Dendritic cell treated with granulocyte-macrophage colony-stimulating factor and Interleukin-4, amounts not matched to agents 40 ng/mL and 50 ng/mL, for 4 days (primary cell): ENCODE measurements at regions of chr20 and their contacts with region 1.

Region 1: DNA sequence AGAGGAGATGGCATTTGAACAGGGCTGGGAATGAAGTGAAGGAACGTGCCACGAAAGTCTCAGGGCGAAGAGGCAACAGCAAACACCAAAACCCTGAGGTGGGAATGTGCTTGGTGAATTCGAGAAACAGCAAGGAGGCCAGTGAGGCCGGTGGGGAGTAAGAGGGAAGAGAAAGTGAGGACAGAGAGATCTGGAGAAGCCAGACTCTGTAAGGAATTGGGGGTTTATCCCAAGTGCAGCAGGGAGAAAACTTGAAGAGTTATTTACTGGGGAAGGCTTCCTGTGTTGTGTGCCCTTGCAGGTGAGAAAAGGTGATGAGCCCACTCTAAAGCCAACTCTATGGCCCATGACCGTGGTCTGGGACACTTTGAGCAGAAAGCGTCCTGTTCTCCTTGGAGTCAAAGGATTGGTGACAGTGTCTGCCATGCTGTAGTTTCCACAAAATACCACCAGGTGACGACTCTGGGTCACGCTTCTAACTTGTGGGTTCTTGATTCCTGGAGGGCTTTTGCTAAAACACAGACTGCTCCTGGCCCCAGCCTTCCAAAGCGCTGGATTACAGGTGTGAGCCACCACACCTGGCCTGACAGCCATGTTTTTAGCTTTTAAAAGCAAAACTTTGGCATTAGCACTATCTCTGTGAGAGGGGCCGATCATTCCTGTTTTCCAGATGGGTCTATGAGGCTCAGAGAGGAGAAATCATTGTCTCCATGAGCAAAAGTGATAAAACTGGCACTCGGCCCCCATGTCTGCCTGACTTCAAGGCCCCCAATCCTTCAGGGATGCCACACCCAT is 18.0 kb upstream of the CSNK2A1 start:
- H3K4me3 Mint-ChIP-seq: no peak overlapping the region
- H3K27ac Mint-ChIP-seq: no peak overlapping the region
- H3K4me1 Mint-ChIP-seq: no peaks in the 10 kb centered on the region
- H3K27me3 Mint-ChIP-seq: peaks cover 22% of the 10 kb centered on the region

Region 2: DNA sequence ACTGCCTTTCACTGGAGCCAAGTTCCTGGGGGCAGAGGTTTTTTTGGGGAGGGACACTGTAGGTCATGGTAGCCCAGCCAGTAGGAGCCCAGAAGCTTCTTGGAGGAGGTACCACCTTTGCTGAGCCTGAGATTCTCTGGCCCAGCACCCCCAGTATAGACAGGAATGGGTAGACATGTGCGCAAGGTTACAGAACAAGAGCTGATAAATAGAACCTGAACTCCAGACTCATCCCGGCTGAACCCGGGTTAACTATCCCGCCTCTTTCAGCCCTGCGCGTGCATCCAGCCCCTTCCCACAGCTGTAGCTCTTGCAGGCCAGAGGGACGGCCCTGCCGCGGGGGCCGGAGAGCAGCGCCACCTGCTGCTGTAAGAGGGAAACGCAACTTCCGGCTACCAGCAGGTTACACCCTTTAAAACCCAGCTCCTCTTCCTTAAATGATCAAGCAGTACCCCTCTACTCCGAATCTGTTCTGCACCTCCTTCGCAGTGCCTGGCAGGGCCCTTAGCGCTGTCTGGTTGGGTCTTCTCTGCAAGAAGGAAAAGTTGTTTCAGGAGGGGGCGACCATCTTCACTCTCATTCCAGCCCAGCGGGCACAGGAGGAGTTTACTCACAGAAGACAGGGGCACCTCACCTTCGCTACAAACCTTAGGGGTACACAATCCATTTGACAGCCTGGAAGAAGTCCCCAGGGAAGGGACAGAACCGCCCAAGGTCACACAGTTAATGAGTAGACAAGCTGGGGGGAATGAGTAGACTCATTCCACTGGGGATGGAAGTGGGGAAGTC is 83.9 kb after region 1 on chr20:
- intact Hi-C with region 1: loop called (anchors 1 kb)
- H3K4me3 Mint-ChIP-seq: no peak overlapping the region
- H3K27ac Mint-ChIP-seq: peak overlapping the region; percentile 73
- H3K4me1 Mint-ChIP-seq: peaks cover 46% of the 10 kb centered on the region
- H3K27me3 Mint-ChIP-seq: peaks cover 26% of the 10 kb centered on the region

Region 3: GRCh38 chr20:667391-667964 is 105.8 kb after region 1 on chr20:
- intact Hi-C with region 1: loop called (anchors 1 kb)
- H3K4me3 Mint-ChIP-seq: no peak overlapping the region
- H3K27ac Mint-ChIP-seq: no peak overlapping the region
- H3K4me1 Mint-ChIP-seq: peaks cover 64% of the 10 kb centered on the region
- H3K27me3 Mint-ChIP-seq: peaks cover 59% of the 10 kb centered on the region

Region 4: DNA sequence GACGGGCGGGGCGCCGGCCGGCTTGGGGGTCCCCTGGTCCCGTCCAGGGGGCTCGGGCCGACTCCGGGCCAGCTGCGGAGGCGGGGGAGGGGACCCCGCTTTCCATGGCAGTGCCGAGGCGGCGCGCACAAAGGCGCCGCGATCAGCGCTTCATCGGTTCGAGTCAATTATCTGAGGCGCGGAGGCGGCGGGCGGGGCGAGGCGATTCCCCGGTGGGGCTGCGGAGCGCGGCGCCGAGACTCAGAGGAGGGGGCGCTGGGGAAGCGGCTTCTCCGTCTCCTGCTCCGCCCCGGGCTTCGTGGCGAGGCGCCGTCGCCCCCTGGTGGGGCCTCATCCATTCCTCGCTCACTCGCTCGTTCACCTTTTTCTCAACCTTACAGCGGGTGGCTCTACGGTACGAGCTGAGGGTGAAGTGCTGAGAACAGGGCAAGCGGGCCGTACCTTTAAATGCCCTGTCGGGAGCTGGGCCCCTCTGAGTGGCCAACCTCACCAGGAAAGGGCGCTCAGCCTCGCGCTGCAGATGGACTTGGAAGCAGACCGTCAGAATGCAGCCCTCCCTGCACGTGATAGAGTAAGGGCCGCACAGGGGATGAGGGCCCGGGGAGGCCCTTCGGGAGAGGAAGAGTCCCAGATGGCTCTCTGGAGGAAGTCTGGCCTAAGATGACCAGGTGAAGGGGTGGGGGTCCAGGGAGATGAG is 166.8 kb after region 1 on chr20:
- intact Hi-C with region 1: loop called (anchors 1 kb)
- H3K4me3 Mint-ChIP-seq: peak overlapping the region; percentile 57
- H3K27ac Mint-ChIP-seq: no peak overlapping the region
- H3K4me1 Mint-ChIP-seq: peaks cover 18% of the 10 kb centered on the region
- H3K27me3 Mint-ChIP-seq: peaks cover 69% of the 10 kb centered on the region

Region 5: DNA sequence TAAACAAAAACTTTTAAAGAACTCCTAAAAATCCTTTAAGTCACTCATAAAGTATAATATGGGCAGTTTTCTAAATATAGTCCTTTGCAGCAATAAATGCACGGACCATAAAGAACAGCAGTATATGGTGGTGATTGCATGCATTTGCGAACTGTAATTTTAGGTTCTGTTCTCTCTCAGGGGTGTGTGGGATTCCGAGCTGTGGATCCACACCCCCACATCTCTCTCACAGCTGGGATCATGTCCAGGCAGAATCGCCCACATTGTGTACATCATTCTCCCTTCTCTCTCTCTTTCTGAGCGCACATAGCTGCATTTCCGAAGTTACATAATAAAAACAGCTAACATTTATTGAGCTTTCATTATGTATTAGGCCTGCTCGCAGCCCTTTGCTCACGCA is 178.1 kb after region 1 on chr20:
- intact Hi-C with region 1: loop called (anchors 1 kb)
- H3K4me3 Mint-ChIP-seq: no peak overlapping the region
- H3K27ac Mint-ChIP-seq: no peak overlapping the region
- H3K4me1 Mint-ChIP-seq: no peaks in the 10 kb centered on the region
- H3K27me3 Mint-ChIP-seq: peaks cover 5% of the 10 kb centered on the region